Activated CD4-positive, alpha-beta memory T cell treated with anti-CD3 and anti-CD28 coated beads for 36 hours (primary cell): ENCODE measurements at regions of chr3 and their contacts with region 1.

Region 1: DNA sequence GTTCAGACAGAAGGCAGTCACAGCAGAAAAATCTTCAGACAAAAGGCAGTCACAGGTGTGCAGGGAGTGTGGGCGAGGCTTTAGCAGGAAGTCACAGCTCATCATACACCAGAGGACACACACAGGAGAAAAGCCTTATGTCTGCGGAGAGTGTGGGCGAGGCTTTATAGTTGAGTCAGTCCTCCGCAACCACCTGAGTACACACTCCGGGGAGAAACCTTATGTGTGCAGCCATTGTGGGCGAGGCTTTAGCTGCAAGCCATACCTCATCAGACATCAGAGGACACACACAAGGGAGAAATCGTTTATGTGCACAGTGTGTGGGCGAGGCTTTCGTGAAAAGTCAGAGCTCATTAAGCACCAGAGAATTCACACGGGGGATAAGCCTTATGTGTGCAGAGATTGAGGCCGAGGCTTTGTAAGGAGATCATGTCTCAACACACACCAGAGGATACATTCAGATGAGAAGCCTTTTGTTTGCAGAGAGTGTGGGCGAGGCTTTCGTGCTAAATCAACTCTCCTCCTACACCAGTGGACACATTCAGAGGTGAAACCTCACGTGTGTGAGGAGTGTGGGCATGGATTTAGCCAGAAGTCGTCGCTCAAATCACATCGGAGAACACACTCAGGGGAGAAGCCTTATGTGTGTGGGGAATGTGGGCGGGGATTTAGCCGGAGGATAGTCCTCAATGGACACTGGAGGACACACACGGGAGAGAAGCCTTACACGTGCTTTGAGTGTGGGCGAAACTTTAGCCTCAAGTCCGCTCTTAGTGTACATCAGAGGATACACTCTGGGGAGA is 27.7 kb downstream of the ZNF589 start:
- DNase-seq: peak; percentile 95
- H3K4me3 Mint-ChIP-seq: peak overlapping the region; percentile 33
- H3K27ac Mint-ChIP-seq: peak overlapping the region; percentile 89
- H3K4me1 Mint-ChIP-seq: peaks cover 37% of the 10 kb centered on the region
- H3K27me3 Mint-ChIP-seq: no peaks in the 10 kb centered on the region

Region 2: GRCh38 chr3:48188266-48189201 is 80.0 kb before region 1 on chr3 and contains the start of gene CDC25A:
- CTCF ChIA-PET with region 1: interaction called, 5 read pairs
- POLR2A ChIA-PET with region 1: interaction called, 6 read pairs
- intact Hi-C with region 1: loop called (anchors 1 kb)
- DNase-seq: peak; percentile 98
- H3K4me3 Mint-ChIP-seq: peak within 1 kb of the TSS; percentile 94
- H3K27ac Mint-ChIP-seq: peak within 1 kb of the TSS; percentile 66
- H3K4me1 Mint-ChIP-seq: peaks cover 14% of the 10 kb centered on the region
- H3K27me3 Mint-ChIP-seq: peaks cover 7% of the 10 kb centered on the region
- total RNA-seq, gene CDC25A: 33.7 to 36.8 TPM

Region 3: DNA sequence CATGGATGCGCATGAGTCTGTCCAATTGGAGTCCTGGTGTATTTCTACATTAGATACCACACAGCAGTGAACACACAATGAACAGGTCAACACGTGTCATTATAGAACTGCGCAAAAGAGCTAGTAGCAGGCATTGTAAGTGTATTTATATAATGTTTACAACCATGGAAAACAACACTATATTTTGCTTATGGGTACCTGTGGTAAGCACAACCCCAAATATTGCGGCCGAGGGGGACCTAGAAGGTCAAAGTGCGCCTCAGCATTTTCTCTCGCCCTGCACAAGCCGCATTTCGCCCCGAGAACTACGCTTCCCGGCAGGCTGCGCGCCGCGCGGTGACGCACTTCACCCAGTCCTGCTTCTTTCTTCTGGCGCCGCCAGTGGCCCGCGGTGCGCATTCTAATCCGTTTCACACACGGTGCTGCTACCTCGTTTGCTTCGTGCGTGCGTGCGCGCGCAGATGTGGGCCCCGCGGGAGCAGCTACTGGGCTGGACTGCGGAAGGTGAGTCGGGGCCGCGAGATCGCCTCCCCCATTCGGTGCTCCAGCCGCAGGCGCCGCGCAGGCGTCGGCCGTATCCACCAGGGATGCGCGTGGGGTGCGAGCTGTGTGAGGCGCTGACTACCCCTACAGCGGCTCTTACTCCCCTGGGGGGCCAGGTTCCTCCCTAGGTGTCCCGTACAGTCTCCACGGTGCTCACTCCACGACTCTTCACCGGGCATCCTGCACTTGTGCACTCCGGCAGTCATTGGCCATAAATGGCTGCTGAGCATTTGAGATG is 27.7 kb before region 1 on chr3 and contains the start of gene ZNF589:
- CTCF ChIA-PET with region 1: interaction called, 26 read pairs
- POLR2A ChIA-PET with region 1: interaction called, 34 read pairs
- intact Hi-C with region 1: loop called (anchors 1 kb)
- DNase-seq: peak; percentile 96
- H3K4me3 Mint-ChIP-seq: peak within 1 kb of the TSS; percentile 88
- H3K27ac Mint-ChIP-seq: peak within 1 kb of the TSS; percentile 92
- H3K4me1 Mint-ChIP-seq: peaks cover 21% of the 10 kb centered on the region
- H3K27me3 Mint-ChIP-seq: no peaks in the 10 kb centered on the region
- total RNA-seq, gene ZNF589: 28.0 to 31.4 TPM

Region 4: DNA sequence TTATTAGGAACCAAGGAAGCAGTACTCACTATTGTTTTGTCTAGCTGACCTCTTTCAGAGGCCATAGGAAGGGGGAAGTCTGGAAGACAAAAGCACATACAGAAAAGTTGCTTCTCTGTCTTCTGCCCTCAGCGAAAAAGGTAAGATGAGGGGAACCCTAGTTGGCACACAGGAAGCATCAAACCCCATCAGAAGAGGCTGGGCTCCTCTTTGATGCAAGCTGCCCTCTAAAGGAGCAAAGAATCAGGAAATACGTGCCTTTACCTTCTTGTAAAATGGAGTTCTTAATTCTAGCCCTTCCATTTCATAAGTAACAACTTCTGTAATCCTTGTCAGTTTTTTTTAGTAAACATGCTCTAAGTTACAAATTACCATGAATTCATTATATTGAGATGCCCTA is 52.4 kb after region 1 on chr3:
- CTCF ChIA-PET with region 1: no interaction called
- POLR2A ChIA-PET with region 1: no interaction called
- intact Hi-C with region 1: no loop called
- DNase-seq: no peak
- H3K4me3 Mint-ChIP-seq: no peak overlapping the region
- H3K27ac Mint-ChIP-seq: no peak overlapping the region
- H3K4me1 Mint-ChIP-seq: no peaks in the 10 kb centered on the region
- H3K27me3 Mint-ChIP-seq: no peaks in the 10 kb centered on the region

Region 5: DNA sequence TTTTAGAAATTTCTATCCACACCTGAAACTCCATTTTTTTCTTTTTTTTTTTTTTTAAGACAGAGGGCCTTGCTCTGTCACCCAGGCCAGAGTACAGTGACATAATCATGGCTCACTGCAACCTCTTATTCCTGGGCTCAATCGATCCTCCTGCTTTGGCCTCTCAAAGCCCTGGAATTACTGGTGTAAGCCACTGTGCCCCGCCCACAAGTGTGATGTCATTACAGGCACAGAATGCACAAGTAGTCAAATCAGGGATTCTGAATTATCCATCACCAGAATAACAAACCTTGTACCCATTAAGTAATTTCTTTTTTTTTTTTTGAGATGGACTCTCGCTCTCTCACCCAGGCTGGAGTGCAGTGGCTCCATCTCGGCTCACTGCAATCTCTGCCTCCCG is 338.9 kb after region 1 on chr3:
- CTCF ChIA-PET with region 1: no interaction called
- POLR2A ChIA-PET with region 1: no interaction called
- intact Hi-C with region 1: no loop called
- DNase-seq: peak; percentile 55
- H3K4me3 Mint-ChIP-seq: no peak overlapping the region
- H3K27ac Mint-ChIP-seq: no peak overlapping the region
- H3K4me1 Mint-ChIP-seq: peaks cover 19% of the 10 kb centered on the region
- H3K27me3 Mint-ChIP-seq: no peaks in the 10 kb centered on the region

Region 6: GRCh38 chr3:48656061-48656840 is 387.7 kb after region 1 on chr3:
- CTCF ChIA-PET with region 1: no interaction called
- POLR2A ChIA-PET with region 1: no interaction called
- intact Hi-C with region 1: loop called (anchors 10 kb)
- DNase-seq: peak; percentile 93
- H3K4me3 Mint-ChIP-seq: peak overlapping the region; percentile 79
- H3K27ac Mint-ChIP-seq: peak overlapping the region; percentile 84
- H3K4me1 Mint-ChIP-seq: peaks cover 5% of the 10 kb centered on the region
- H3K27me3 Mint-ChIP-seq: peaks cover 2% of the 10 kb centered on the region